Activated CD8-positive, alpha-beta memory T cell treated with anti-CD3 and anti-CD28 coated beads, Interleukin-2, amount 10 ng/mL, durations not matched to agents 7 days and 5 days (primary cell): ENCODE measurements at regions of chr16 and their contacts with region 1.

Region 1: DNA sequence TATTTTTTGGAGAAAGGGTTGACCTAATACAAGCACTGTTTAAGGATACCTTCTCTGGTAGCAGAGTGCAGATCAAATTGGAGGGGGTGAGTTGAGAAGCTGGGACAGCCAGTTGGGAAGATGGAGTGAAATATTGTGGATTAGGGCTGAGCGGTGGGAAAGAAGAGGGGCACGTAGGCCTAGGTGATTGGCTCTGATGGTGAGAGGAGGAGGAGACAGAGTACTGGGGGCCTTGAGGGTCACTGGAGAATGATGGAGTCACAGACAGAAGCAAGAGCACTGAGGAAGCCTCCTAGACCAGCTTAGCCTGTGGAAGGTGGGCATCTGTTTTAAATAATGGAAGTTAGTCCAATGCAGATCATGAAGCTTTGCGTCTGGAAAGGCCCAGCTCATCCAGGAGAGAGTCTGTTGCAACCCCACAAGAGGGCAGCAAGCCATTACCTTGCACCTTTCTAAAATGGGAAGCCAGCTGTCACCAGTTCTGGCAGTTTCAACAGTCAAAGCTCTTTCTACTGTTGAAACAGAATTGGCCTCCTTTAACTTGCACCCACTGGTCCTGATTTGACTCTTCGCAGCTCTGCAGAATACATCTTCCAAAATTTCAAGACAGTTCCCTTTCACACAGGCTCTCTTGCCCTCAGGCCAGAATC is 11.8 kb downstream of the SLC9A5 start:
- DNase-seq: peak; percentile 59
- ATAC-seq: peak; percentile 59
- H3K4me3 Mint-ChIP-seq: no peak overlapping the region
- H3K27ac Mint-ChIP-seq: no peak overlapping the region
- H3K4me1 Mint-ChIP-seq: no peaks in the 10 kb centered on the region
- H3K27me3 Mint-ChIP-seq: no peaks in the 10 kb centered on the region

Region 2: DNA sequence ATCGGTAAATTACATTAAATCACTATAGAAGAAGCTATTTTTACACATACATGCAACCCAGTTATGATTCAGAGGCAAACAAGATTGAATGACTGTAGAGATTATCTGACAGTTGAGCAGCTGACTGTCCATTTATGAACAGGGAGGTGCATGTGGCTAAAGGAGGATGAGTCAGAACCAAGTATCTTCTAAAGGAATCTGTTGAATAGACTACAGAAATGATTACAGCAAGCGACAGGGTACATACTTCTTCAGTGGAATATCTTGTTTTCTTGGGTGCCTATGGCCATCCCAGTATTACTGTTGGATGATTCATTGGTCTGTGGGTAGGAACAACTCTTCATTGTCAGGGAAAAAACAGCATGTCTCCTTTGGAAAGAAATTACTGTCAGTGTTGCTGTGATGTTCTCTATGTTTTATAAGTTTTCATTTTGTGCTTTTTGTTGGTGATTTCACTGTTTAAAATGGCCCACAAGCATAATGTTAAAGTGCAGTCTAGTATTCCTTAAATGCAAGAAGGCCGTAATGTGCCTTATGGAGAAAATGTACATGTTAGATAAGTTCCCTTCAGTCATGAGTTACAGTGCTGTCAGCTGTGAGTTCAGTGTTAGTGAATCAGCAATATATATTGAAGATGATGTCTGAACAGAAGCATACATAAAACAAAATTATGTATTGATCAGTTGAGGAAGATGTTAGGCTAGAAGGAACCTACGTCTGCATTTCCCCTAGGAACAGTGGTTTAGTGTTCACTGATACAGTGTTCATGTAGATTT is 204.7 kb before region 1 on chr16:
- CTCF ChIA-PET with region 1: no interaction called
- DNase-seq: peak; percentile 49
- ATAC-seq: peak; percentile 73
- H3K4me3 Mint-ChIP-seq: peak overlapping the region; percentile 48
- H3K27ac Mint-ChIP-seq: peak overlapping the region; percentile 82
- H3K4me1 Mint-ChIP-seq: peaks cover 61% of the 10 kb centered on the region
- H3K27me3 Mint-ChIP-seq: no peaks in the 10 kb centered on the region

Region 3: DNA sequence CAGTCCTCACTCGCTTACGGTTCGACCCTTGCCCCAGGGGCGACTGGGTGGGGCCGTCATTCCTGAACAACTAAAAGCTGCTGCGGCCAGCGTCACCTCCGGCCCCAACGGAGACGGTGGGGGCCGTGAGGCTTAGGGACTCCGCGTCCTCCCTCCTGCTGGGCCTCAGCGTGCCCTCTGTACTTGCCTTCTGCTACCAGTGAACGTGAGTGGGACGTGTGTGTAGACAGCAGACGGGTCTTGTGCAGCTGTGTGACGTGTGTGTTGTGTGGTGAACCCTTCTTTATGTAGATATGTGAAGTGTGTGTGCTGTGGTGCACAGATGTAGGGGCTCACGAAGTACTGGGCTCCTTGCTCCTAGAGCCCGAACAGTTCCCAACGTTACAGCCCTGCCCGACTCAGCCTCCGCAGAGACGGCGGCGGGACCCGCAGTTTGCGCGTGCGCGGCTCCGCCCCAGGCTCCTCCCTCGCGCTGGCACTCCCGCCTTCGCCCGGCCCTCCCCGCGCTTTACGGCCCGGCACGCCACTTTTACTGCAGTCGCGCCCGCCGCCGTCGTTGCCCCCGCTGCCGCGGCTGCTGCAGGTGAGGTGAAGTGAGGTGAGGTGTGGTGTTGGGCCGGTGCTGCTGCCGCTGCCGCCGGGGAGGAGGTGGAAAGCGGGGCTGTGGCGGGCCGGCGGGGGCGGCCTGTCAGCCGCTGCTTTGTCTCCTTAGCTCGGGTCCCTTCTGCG is 151.0 kb before region 1 on chr16 and contains the start of gene PHAF1:
- CTCF ChIA-PET with region 1: no interaction called
- DNase-seq: peak; percentile 96
- ATAC-seq: peak; percentile 97
- H3K4me3 Mint-ChIP-seq: peak within 1 kb of the TSS; percentile 92
- H3K27ac Mint-ChIP-seq: peak within 1 kb of the TSS; percentile 74
- H3K4me1 Mint-ChIP-seq: peaks cover 33% of the 10 kb centered on the region
- H3K27me3 Mint-ChIP-seq: no peaks in the 10 kb centered on the region
- total RNA-seq, gene PHAF1: 14.2 to 15.2 TPM

Region 4: GRCh38 chr16:67137605-67138004 is 122.9 kb before region 1 on chr16:
- CTCF ChIA-PET with region 1: no interaction called
- DNase-seq: no peak
- ATAC-seq: no peak
- H3K4me3 Mint-ChIP-seq: no peak overlapping the region
- H3K27ac Mint-ChIP-seq: no peak overlapping the region
- H3K4me1 Mint-ChIP-seq: peaks cover 3% of the 10 kb centered on the region
- H3K27me3 Mint-ChIP-seq: no peaks in the 10 kb centered on the region

Region 5: GRCh38 chr16:67339453-67339852 is 78.9 kb after region 1 on chr16:
- CTCF ChIA-PET with region 1: interaction called, 14 read pairs
- DNase-seq: no peak
- ATAC-seq: peak; percentile 16
- H3K4me3 Mint-ChIP-seq: no peak overlapping the region
- H3K27ac Mint-ChIP-seq: no peak overlapping the region
- H3K4me1 Mint-ChIP-seq: no peaks in the 10 kb centered on the region
- H3K27me3 Mint-ChIP-seq: peaks cover 17% of the 10 kb centered on the region

Region 6: GRCh38 chr16:67399181-67399733 is 138.7 kb after region 1 on chr16:
- CTCF ChIA-PET with region 1: interaction called, 12 read pairs
- DNase-seq: peak; percentile 55
- ATAC-seq: peak; percentile 83
- H3K4me3 Mint-ChIP-seq: no peak overlapping the region
- H3K27ac Mint-ChIP-seq: no peak overlapping the region
- H3K4me1 Mint-ChIP-seq: no peaks in the 10 kb centered on the region
- H3K27me3 Mint-ChIP-seq: peaks cover 22% of the 10 kb centered on the region